AG04450 (cell line): ENCODE measurements at regions of chr17 and their contacts with region 1.

Region 1: DNA sequence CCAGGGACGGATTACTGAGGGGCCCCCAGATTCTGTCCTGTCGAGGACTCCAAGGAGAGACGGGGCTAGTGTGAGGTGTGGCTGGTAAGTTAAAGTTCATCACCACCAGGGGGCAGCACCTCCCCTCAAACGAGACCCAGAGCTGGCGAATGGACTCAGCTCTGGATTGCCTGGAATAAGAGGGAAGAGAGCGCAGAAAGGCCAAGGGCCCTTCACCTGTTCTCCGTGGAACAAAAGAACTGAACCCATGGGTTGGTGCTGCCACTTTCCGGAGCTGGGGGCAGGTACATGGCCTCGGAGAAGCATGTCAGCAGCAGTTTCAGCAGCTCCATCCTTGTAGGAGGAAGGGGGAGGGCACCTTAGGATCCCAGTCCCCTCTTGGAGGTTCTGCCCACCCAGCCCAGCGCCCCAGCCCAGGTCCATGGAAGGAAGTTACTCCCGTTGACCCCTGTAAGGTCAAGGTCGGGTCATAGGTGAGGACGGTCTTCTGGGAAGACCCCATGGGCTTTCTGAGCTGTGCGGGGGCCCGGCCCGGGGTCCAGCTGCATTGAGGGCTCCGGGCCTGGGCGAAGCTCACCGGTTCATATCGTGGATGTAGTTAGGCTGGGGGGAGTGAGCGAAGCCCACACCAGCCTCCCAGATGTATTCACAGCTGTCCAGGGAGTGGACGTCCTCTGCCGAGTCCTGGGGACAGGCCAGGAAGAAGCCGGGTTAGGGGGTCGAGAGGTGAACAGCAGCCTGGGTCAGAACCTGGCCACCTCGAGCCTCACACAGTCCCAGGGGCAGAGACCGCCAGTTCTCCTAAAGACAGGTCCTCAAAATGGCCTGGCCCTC is 10.7 kb downstream of the HID1 start:
- DNase-seq: peak; percentile 61
- H3K4me3 ChIP-seq: no peak overlapping the region
- H3K27ac ChIP-seq: no peak overlapping the region
- H3K27me3 ChIP-seq: no peaks in the 10 kb centered on the region
- CTCF ChIP-seq: peak; percentile 70

Region 2: DNA sequence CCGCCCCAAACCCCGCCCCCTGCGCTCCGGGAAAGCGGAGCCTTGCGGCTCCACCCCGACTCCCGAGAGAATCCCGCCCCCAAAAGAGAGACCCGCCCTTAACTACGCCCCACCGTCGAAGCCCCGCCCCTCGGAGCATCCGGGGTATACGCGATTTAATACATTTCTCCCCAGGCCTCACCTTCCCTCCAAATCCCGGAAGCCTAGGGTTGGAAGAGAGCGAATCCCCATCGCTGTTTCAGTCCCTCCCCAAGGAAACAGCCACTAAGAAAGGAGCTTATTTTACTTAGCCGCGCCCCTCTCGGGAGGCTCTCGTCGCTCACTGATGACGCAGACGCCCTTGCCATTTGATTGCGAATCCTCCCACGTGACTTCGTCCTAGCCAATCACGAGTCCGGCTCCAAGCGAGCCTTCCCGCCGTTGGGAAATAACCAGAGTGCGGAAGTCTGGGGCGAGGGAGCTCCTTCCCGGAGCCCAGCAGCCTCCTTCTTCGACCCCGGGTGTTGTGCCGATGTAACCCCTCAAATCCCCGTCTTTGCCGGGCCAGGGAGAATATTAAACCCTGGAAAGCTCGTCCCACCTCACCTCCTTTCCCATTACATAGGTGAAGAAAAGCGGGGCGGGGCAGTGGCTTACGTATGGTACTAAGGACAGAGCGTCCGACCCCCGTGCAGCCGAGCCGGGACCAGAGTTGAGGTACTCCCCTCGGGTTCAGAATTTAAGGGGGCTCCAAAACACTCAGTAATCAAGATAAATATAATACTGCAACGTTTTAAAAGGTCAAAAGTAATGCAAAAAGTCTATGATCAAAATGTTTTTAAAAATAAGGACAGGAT is 88.6 kb before region 1 on chr17:
- CTCF ChIA-PET with region 1: interaction called, 12 read pairs
- POLR2A ChIA-PET with region 1: interaction called, 5 read pairs
- DNase-seq: peak; percentile 99
- H3K4me3 ChIP-seq: peak overlapping the region; percentile 86
- H3K27ac ChIP-seq: peak overlapping the region; percentile 83
- H3K27me3 ChIP-seq: peaks cover 8% of the 10 kb centered on the region
- CTCF ChIP-seq: no peak

Region 3: DNA sequence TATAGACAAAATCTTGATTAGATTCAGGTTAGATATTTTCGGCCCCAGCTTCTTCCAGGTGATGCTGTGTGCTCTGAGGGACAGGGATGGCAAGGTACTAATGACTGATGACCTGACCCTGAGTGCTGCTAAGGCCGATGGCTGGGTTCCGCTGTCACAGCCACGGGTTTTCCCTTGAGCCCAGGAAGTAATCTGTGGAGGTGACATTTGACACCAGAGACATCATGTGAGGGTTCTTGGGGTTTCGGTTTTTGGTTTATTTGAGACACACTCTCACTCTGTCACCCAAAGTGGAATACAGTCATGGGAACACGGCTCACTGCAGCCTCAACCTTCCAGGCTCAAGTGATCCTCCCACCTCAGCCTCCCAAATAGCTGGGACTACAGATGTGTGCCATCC is 16.3 kb before region 1 on chr17:
- CTCF ChIA-PET with region 1: interaction called, 21 read pairs
- POLR2A ChIA-PET with region 1: no interaction called
- DNase-seq: no peak
- H3K4me3 ChIP-seq: no peak overlapping the region
- H3K27ac ChIP-seq: no peak overlapping the region
- H3K27me3 ChIP-seq: peaks cover 43% of the 10 kb centered on the region
- CTCF ChIP-seq: no peak

Region 4: GRCh38 chr17:75012346-75013091 is 50.6 kb after region 1 on chr17 and contains the start of gene MRPL58:
- CTCF ChIA-PET with region 1: interaction called, 62 read pairs
- POLR2A ChIA-PET with region 1: interaction called, 10 read pairs
- DNase-seq: peak; percentile 72
- H3K4me3 ChIP-seq: peak within 1 kb of the TSS; percentile 90
- H3K27ac ChIP-seq: peak within 1 kb of the TSS; percentile 97
- H3K27me3 ChIP-seq: no peaks in the 10 kb centered on the region
- CTCF ChIP-seq: peak; percentile 62
- polyA plus RNA-seq, gene MRPL58: 48.5 and 53.7 TPM in 2 replicates

Region 5: DNA sequence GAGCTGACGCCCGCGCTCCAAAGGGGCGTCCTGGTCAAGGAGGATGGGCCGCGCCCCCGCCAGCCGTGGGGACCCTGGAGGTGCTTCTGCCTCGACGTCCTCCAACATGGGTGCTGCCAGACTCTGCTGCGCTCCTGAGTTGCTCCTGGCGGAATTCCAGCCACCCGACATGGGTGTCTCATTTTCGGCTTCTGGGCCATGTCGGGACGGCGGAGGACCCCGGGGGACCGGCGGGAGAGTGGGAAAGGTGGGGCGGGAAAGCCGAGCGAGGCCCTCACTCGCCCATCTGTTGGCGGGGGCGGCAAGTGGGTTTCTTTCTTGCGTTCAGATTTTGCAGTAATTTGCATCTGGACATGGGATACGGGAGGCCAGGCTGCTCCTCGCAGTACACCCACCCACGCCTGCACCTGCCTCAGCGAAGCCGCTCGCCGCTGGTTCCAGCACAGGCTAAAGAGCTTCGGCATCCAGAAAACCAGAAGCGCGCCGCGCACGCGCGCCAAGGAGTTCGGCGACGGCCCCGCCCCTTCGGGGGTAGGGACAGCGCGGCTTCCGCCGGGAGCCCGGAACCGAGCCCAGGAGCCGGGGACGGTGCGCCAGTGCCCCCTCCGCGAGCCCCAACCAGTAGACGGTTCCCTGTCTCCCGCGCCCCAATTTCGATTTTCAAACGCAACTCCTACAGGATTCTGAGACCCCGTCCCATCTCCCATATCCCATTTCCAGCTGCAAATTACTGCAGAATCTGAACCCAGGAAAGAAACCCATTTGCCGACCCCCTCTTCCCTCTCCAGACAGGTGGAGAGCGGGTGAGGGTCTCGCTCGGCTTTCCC is 147.7 kb after region 1 on chr17 and contains the start of gene ARMC7:
- CTCF ChIA-PET with region 1: interaction called, 20 read pairs
- POLR2A ChIA-PET with region 1: no interaction called
- DNase-seq: peak; percentile 49
- H3K4me3 ChIP-seq: peak within 1 kb of the TSS; percentile 80
- H3K27ac ChIP-seq: no peak within 1 kb of the TSS
- H3K27me3 ChIP-seq: peaks cover 7% of the 10 kb centered on the region
- CTCF ChIP-seq: no peak
- polyA plus RNA-seq, gene ARMC7: 5.6 and 6.5 TPM in 2 replicates

Region 6: DNA sequence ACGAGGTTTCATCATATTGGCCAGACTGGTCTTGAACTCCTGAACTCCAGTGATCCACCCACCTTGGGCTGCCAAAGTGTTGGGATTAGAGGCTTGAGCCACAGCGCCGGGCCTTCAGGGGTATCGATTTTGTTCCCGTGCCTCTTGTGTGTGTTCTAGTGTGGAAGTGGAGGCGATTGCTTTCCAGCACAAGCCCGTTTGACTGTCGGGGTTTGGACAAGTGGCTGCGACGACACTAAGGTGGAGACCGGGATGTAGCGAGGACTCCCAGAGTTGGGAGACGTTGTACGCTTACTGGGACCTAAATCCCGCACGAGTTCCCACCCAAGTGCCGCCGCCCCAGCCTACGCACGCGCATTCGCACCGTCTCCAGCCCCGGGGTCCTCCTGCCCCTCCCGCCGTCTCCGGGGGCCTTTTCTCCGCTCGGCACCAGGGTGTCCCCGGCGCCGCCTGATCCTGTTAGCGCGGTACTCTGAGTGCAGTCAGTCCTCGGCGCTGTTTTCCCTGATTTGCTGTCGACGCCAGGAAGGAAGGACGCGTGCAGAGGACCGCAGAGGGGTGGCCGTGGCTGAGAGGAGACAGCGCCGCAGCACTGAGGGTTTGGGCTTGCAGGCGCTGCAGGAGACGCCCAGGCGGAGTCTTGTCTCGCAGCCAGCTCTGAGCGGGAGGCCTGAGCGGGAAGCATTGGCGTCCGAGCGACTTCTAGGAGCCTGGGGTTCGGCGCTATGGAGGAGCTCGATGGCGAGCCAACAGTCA is 243.3 kb after region 1 on chr17 and contains the start of gene NUP85:
- CTCF ChIA-PET with region 1: interaction called, 36 read pairs
- POLR2A ChIA-PET with region 1: no interaction called
- DNase-seq: peak; percentile 79
- H3K4me3 ChIP-seq: peak within 1 kb of the TSS; percentile 100
- H3K27ac ChIP-seq: peak within 1 kb of the TSS; percentile 99
- H3K27me3 ChIP-seq: no peaks in the 10 kb centered on the region
- CTCF ChIP-seq: no peak
- polyA plus RNA-seq, gene NUP85: 31.5 and 33.3 TPM in 2 replicates

Region 7: DNA sequence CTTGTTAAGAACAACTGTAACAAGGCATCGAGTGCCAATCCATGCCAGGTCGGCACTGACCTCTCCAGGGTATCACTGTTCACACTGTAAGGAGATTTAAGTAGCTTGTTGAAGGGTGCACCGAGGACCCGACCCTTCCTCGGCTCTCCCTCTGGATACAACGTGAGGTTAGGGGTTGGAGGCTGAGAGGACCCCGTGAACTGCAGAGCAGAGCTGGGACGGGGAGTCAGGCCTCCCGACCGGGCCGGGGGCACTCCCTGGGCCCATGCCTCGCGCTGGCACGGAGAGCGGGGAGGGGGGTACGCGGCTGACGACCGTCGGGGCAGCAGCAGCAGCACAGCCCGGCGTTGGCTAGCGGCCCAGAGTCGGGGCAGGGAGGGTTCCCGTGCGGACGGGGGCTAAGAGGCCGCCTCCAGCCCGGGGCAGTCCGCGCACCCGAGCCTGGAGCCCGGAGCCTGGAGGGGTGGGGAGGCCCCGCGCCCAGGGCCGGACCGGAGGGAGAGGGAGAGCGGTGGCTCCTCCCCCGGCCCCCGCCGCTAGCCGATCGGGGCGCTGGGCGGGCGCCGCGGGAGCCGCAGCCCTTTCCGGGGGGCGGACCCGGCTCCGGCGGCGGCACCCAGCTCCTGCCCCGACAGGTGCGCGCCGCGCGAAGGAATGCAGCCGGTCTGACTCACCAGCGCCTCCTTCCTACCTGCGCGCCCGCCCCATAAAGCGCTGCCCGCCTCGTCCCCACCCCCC is 759.0 kb after region 1 on chr17 and contains the start of gene ITGB4:
- CTCF ChIA-PET with region 1: no interaction called
- POLR2A ChIA-PET with region 1: no interaction called
- DNase-seq: no peak
- H3K4me3 ChIP-seq: peak within 1 kb of the TSS; percentile 25; the same call in 1 of the 2 replicates
- H3K27ac ChIP-seq: no peak within 1 kb of the TSS
- H3K27me3 ChIP-seq: peaks cover 43% of the 10 kb centered on the region
- CTCF ChIP-seq: no peak
- polyA plus RNA-seq, gene ITGB4: 0.21 and 0.31 TPM in 2 replicates